AG04449 (cell line): ENCODE measurements at regions of chr1 and their contacts with region 1.

Region 1: GRCh38 chr1:109532365-109533136 is 7.1 kb upstream of the GPR61 start:
- DNase-seq: no peak
- H3K4me3 ChIP-seq: peak overlapping the region; percentile 34
- CTCF ChIP-seq: peak; percentile 95

Region 2: GRCh38 chr1:109112652-109113285 is 419.8 kb before region 1 on chr1:
- CTCF ChIA-PET with region 1: interaction called, 15 read pairs
- POLR2A ChIA-PET with region 1: no interaction called
- DNase-seq: no peak
- H3K4me3 ChIP-seq: peak overlapping the region; percentile 25
- CTCF ChIP-seq: peak; percentile 98

Region 3: DNA sequence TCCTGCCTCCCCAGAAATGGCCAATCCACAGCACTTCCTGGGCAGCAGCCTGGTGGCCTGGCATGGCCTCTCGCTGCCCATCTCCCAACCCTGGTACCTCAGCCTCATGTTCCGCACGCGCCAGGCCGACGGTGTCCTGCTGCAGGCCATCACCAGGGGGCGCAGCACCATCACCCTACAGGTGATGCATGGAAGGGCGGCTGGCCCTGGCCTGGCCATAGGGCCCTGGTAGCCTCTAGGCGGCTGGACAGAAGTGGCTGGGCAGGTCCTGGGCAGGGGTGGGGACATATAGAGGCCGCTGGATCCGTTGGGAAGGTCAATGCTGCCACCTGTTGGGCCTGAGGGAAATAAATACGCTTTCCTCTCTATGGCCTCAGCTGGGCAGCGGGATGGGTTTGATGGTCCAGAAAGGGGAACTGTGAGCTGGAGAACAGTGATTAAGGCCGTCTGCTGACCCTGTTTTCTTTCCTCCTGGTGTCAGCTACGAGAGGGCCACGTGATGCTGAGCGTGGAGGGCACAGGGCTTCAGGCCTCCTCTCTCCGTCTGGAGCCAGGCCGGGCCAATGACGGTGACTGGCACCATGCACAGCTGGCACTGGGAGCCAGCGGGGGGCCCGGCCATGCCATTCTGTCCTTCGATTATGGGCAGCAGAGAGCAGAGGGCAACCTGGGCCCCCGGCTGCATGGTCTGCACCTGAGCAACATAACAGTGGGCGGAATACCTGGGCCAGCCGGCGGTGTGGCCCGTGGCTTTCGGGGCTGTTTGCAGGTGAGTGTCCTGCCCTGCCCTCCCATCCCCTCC is 268.8 kb before region 1 on chr1:
- CTCF ChIA-PET with region 1: interaction called, 24 read pairs
- POLR2A ChIA-PET with region 1: no interaction called
- DNase-seq: no peak
- H3K4me3 ChIP-seq: no peak overlapping the region
- CTCF ChIP-seq: peak; percentile 98

Region 4: GRCh38 chr1:109404838-109405237 is 127.7 kb before region 1 on chr1:
- CTCF ChIA-PET with region 1: interaction called, 67 read pairs
- POLR2A ChIA-PET with region 1: no interaction called
- DNase-seq: no peak
- H3K4me3 ChIP-seq: no peak overlapping the region
- CTCF ChIP-seq: no peak

Region 5: DNA sequence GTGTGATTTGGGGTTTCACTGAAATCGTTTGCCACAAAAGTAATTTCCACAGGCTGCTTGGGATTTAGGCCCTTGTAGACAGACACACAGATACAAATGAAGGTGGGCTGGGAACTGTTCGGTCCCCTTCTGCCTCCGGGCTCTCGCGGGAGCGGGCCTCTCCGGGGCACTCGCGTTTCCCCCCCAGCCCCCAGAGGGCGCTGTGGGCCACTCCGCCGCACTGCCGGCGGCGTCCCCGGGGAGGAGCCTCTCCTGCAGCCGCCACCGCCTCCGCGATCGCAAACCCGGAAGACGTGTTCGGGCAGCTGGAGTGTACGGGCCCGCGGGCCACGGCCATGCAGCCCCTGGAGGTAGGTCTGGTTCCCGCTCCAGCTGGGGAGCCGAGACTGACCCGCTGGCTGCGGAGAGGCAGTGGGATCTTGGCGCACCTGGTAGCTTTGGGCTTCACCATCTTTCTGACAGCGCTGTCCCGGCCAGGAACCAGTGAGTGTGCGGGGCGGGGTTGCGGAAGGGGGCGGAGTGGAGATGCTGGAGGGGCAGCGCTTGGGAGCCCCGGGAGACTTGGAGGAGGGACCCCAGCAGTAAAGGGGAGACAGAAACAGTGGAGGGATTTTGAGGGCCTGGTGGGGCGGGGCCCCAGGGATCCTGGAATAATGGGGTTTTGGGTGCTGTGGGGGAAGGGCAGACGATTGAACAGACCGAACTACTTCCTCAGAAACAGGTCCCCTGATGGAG is 38.6 kb before region 1 on chr1 and contains the start of gene CYB561D1:
- CTCF ChIA-PET with region 1: interaction called, 2,790 read pairs
- POLR2A ChIA-PET with region 1: interaction called, 9 read pairs
- DNase-seq: no peak
- H3K4me3 ChIP-seq: peak within 1 kb of the TSS; percentile 100
- CTCF ChIP-seq: peak; percentile 98

Region 6: GRCh38 chr1:109636201-109636952 is 103.8 kb after region 1 on chr1:
- CTCF ChIA-PET with region 1: interaction called, 381 read pairs
- POLR2A ChIA-PET with region 1: no interaction called
- DNase-seq: no peak
- H3K4me3 ChIP-seq: no peak overlapping the region
- CTCF ChIP-seq: no peak